ENCODE measurements at regions of chr3 and their contacts with region 1.

Region 1: GRCh38 chr3:31561901-31562341 is 29.2 kb downstream of the STT3B start:
- DNase-seq: no peak
- H3K4me3 Mint-ChIP-seq: no peak overlapping the region
- H3K27ac Mint-ChIP-seq: peak overlapping the region; percentile 42
- H3K4me1 Mint-ChIP-seq: peaks cover 80% of the 10 kb centered on the region
- H3K27me3 Mint-ChIP-seq: no peaks in the 10 kb centered on the region

Region 2: DNA sequence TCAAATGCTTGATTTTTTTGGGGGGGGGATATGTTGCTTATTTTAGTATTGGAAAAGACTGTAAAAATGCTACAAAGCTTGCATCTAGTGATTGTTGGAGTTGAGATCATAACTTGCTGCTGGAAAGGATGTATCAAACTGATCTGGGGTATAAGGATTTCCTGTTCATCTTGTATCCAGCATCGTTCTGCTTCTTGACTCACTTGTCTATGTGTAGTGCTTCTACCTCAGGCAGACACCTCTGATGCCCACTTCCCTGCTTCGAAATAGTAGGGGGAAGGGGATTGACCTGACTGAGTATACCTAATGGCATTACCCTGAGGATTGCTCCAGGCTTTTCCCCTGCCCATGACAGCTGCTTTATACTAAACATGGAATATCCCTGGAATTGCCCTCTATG is 13.5 kb after region 1 on chr3:
- intact Hi-C with region 1: loop called (anchors 2 kb)
- DNase-seq: no peak
- H3K4me3 Mint-ChIP-seq: no peak overlapping the region
- H3K27ac Mint-ChIP-seq: peak overlapping the region; percentile 59
- H3K4me1 Mint-ChIP-seq: peaks cover 65% of the 10 kb centered on the region
- H3K27me3 Mint-ChIP-seq: no peaks in the 10 kb centered on the region

Region 3: DNA sequence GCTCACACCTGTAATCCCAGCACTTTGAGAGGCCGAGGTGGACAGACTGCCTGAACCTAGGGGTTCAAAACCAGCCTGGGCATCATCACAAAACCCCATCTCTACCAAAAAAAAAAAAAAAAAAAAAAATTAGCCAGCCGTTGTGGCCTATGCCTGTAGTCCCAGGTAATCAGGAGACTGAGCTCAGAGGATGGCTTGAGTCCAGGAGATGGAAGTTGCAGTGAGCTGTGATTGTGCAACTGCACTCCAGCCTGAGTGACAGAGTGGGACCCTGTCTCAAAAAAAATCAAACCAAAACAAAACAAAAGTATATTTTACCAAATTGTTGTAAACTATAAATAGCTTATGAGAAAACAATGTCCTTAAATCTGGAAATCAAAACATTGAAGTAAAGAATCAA is 1913.0 kb after region 1 on chr3:
- intact Hi-C with region 1: no loop called
- DNase-seq: no peak
- H3K4me3 Mint-ChIP-seq: no peak overlapping the region
- H3K27ac Mint-ChIP-seq: no peak overlapping the region
- H3K4me1 Mint-ChIP-seq: no peaks in the 10 kb centered on the region
- H3K27me3 Mint-ChIP-seq: no peaks in the 10 kb centered on the region

Measured in activated T-helper 1 cell treated with anti-CD3 and anti-CD28 coated beads, Interleukin-12 subunit alpha, Interleukin-12 subunit beta, Interleukin-2, Interleukin-4 antibody, amounts not matched to agents 30 ng/mL and 10 ng/mL and 1 ng/mL, durations not matched to agents 14 hours and 24 hours and 36 hours (primary cell).